Endothelial cell of umbilical vein (primary cell): ENCODE measurements at regions of chr4 and their contacts with region 1.

Region 1: GRCh38 chr4:128060699-128061565 is at the start of gene LARP1B:
- DNase-seq: peak; percentile 97
- H3K4me3 ChIP-seq: peak within 1 kb of the TSS; percentile 74 to 86 (median 86)
- H3K27ac ChIP-seq: peak within 1 kb of the TSS; percentile 87
- H3K4me1 ChIP-seq: peaks cover 10% of the 10 kb centered on the region
- H3K27me3 ChIP-seq: no peaks in the 10 kb centered on the region
- CTCF ChIP-seq: no peak
- POLR2A ChIP-seq: peak; percentile 94
- total RNA-seq, gene LARP1B: 27.7 and 28.8 TPM in 2 replicates

Region 2: DNA sequence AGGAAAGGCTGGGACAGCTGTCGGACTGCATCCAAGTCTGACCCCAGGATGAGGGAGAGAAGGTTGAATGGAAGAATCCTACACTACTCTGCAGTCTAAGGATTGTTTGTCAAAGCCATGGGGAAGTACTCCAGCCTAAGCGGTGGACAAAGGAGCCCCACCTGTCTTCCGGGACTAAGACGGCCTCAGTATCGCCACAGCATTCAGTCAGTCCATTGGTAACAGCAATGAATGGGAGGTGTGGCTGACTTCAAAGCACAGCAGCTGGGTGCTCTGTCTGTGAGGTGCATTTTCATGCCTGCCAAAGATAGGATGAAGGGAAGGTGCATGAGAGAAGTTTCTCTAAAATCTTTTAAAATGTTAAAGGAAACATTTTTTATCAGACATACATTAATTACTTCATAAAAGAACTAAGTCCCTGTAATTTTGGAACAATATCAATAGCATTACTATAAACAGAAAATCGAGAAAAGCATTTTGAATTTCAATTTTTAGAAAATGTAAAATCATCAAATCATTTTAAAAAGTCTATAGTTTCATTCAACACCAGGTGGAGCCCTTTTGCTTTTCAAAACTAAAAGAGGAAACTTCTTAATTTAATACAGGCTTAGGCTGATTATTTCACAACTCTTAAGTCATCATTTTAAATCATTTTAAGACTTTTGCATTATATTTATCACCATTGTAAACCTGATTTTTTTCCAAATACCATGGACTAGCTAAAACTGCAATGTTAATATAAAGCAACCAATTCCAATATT is 455.8 kb before region 1 on chr4:
- CTCF ChIA-PET with region 1: no interaction called
- POLR2A ChIA-PET with region 1: no interaction called
- dilution Hi-C with region 1: no loop called
- intact Hi-C with region 1: loop called (anchors 5 kb)
- DNase-seq: peak; percentile 26
- H3K4me3 ChIP-seq: no peak overlapping the region
- H3K27ac ChIP-seq: no peak overlapping the region
- H3K4me1 ChIP-seq: no peaks in the 10 kb centered on the region
- H3K27me3 ChIP-seq: peaks cover 10 to 26% of the 10 kb centered on the region in 2 experiments
- CTCF ChIP-seq: peak; percentile 10 to 15
- POLR2A ChIP-seq: no peak

Region 3: DNA sequence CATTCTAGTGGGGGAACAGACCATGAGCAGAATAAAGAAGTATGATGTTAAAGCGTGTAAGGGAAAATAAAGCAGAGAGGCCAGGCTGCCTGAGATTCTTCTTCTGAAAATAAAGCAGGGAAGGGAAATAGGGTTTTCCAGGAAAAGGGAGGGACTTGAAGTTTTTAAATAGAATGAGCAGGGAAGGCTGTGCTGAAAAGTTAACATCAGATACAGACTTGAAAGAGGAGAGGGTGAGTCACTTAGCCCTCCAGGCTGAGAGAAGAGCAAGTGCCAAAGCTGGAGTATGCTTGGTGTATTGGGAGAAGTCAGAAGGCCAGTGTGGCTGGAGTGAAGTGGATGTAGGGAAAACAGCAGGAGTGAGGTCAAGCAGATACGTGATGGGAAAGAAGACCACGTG is 190.2 kb before region 1 on chr4:
- CTCF ChIA-PET with region 1: no interaction called
- POLR2A ChIA-PET with region 1: no interaction called
- dilution Hi-C with region 1: no loop called
- intact Hi-C with region 1: no loop called
- DNase-seq: peak; percentile 85
- H3K4me3 ChIP-seq: no peak overlapping the region
- H3K27ac ChIP-seq: peak overlapping the region; percentile 2
- H3K4me1 ChIP-seq: peaks cover 12% of the 10 kb centered on the region
- H3K27me3 ChIP-seq: no peaks in the 10 kb centered on the region
- CTCF ChIP-seq: no peak
- POLR2A ChIP-seq: no peak

Region 4: DNA sequence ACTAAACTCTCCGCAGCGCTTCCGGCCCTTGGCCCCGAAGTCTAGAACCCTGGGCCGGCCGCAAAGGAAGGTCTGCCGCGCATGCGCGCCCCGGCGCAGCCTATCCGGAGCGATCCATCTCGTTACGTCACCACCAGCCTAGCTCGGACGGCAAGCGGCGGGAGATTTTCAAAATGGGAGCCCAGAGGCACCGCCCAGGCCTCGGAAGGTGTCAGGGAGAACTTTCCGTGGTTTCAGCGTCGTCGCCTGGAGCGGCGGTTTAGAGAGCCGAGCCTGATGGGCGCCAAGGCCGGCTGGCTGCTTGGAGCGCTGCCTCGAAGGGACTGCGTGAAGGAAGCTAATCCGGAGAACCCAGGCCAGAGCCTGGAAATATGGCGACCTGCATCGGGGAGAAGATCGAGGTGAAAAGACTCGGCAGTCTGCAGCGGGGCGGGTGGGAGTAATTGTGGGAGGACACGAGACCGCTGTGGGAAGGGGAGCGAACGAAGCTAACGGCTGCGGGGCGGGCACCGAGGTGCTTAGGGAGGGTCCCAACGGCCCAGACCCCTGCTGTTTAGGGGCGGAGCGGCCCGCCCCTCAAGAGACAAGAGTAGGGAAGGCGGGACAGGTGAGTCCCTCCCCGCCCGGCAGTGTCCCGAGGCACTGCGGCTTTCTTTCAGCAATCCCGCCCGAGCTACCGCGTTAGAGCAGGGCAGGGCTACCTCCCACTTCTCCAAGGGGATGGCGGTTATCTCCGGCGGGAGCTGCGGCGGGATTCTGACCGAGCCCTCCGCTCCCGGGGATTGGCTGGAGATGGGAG is 180.0 kb before region 1 on chr4 and contains the start of gene PLK4:
- CTCF ChIA-PET with region 1: no interaction called
- POLR2A ChIA-PET with region 1: no interaction called
- dilution Hi-C with region 1: no loop called
- intact Hi-C with region 1: loop called (anchors 5 kb)
- DNase-seq: peak; percentile 97
- H3K4me3 ChIP-seq: peak within 1 kb of the TSS; percentile 92 to 97 (median 97)
- H3K27ac ChIP-seq: peak within 1 kb of the TSS; percentile 84
- H3K4me1 ChIP-seq: peaks cover 8% of the 10 kb centered on the region
- H3K27me3 ChIP-seq: no peaks in the 10 kb centered on the region
- CTCF ChIP-seq: no peak
- POLR2A ChIP-seq: peak; percentile 28
- total RNA-seq, gene PLK4: 34.8 and 37.7 TPM in 2 replicates

Region 5: GRCh38 chr4:128155231-128155855 is 94.4 kb after region 1 on chr4:
- CTCF ChIA-PET with region 1: no interaction called
- POLR2A ChIA-PET with region 1: interaction called, 3 read pairs
- dilution Hi-C with region 1: no loop called
- intact Hi-C with region 1: loop called (anchors 2 kb)
- DNase-seq: peak; percentile 47
- H3K4me3 ChIP-seq: no peak overlapping the region
- H3K27ac ChIP-seq: peak overlapping the region; percentile 85
- H3K4me1 ChIP-seq: peaks cover 28% of the 10 kb centered on the region
- H3K27me3 ChIP-seq: no peaks in the 10 kb centered on the region
- CTCF ChIP-seq: no peak
- POLR2A ChIP-seq: peak; percentile 14

Region 6: GRCh38 chr4:129093191-129093920 is 1032.4 kb after region 1 on chr4 and contains the start of gene SCLT1:
- CTCF ChIA-PET with region 1: no interaction called
- POLR2A ChIA-PET with region 1: no interaction called
- dilution Hi-C with region 1: no loop called
- intact Hi-C with region 1: loop called (anchors 5 kb)
- DNase-seq: peak; percentile 99
- H3K4me3 ChIP-seq: peak within 1 kb of the TSS; percentile 86 to 97 (median 88)
- H3K27ac ChIP-seq: peak within 1 kb of the TSS; percentile 89
- H3K4me1 ChIP-seq: peaks cover 26% of the 10 kb centered on the region
- H3K27me3 ChIP-seq: no peaks in the 10 kb centered on the region
- CTCF ChIP-seq: no peak
- POLR2A ChIP-seq: peak; percentile 64
- total RNA-seq, gene SCLT1: 14.0 and 16.3 TPM in 2 replicates